Prostate gland (tissue), 2 donors: ENCODE measurements at regions of chr7 and their contacts with region 1.

Region 1: DNA sequence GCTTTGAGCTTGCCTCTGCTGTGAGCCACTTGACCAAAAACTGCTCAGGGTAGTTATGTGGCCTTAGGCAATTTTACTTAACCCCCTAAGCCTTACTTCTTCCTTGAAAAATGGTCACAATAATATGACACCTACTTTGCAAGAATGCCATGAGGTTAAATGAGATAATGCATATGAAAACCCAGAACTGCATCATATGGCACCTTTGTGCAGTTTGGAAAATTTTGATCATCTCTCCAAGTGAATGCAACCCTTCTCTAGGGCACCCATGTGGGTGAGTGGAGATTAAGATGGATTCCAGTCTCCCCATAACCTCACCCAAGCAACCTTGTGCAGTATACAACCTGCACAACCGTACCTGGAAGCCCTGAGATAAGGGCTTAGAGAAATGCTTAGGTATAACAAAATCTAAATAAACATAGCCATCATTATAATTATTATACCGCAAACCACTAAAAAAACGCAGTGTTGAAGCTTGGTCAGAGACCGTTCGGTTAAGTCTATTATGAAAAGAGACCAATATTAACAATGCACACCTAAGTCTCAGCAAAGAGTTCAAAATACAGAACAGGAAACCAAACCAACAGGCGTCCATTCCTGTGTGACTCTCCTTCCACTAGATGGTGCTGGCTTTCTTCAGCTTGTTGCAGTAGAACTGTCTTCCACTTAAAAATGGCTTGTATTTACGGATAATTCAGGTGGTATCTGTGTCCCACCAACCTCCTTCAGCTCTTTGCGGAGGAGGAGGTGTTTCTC is 21.0 kb upstream of the ASB15 start:
- DNase-seq: no peak
- H3K4me3 ChIP-seq: no peak overlapping the region
- H3K27ac ChIP-seq: no peak overlapping the region
- H3K4me1 ChIP-seq: no peaks in the 10 kb centered on the region
- H3K27me3 ChIP-seq: no peaks in the 10 kb centered on the region
- CTCF ChIP-seq: peak in 2 of 4 experiments; percentile 37 to 44
- POLR2A ChIP-seq: no peak

Region 2: DNA sequence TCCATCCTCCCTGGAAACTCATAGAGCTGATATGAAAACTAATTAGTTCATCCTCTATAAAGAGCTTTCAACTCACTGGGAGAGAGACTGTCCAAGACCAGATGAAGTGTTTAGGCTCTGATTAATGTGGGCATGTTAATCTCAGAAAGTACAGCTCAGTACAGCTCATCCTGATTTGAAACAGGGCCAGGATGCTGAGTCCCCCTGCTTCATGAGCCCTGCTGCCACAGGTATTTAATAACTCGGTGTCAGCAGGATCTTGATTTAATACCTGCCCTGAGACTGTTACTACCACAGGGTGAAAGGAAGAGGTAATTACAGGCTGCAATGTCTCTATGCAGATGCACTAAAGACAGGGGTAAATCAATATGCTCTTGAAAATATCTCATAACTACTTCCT is 85.9 kb after region 1 on chr7:
- intact Hi-C with region 1: no loop called
- DNase-seq: no peak
- H3K4me3 ChIP-seq: no peak overlapping the region
- H3K27ac ChIP-seq: no peak overlapping the region
- H3K4me1 ChIP-seq: no peaks in the 10 kb centered on the region
- H3K27me3 ChIP-seq: no peaks in the 10 kb centered on the region
- CTCF ChIP-seq: no peak
- POLR2A ChIP-seq: no peak

Region 3: DNA sequence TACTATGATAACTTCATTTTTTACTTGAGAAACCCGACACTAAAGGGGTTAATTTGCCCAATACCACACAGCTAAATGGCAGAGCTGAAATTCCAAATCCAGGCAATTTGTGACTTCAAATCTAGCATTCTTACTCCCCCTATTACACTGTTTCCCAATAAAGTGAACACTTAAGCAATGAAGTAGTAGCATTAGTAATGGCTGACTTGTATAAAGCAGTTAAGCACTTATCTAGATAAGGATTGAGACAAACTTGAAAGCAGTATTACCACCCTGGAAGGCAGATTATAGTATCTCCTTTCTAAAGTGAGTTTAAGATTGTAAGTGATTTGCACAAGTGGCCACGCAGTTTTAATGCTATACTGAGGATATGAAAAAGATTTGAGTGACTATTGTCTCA is 128.9 kb after region 1 on chr7:
- intact Hi-C with region 1: loop called (anchors 10 kb)
- DNase-seq: no peak
- H3K4me3 ChIP-seq: no peak overlapping the region
- H3K27ac ChIP-seq: no peak overlapping the region
- H3K4me1 ChIP-seq: no peaks in the 10 kb centered on the region
- H3K27me3 ChIP-seq: no peaks in the 10 kb centered on the region
- CTCF ChIP-seq: no peak
- POLR2A ChIP-seq: no peak